CD4-positive, alpha-beta T cell (primary cell): ENCODE measurements at regions of chr3 and their contacts with region 1.

Region 1: DNA sequence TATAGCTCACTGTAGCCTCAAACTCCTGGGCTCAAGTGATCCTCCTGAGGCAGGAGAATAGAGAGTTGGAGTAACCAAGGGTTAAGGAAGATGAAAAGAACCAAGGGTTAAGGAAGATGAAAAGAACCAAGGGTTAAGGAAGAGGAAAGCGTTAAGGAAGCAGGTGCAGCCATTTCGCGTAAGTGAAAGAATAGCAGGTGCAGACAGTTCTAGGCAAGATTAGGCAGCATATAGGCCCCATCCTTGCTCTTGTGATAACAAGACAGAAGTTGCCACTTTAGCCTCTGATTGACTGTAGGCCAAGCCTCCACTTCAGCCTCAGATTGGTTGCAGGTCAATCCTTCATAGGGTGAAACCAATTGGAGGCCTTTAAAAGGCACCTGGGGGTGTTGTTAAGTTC is 677.4 kb downstream of the PDCD6IP start:
- DNase-seq: no peak
- ATAC-seq: no peak
- H3K4me3 ChIP-seq: no peak overlapping the region
- H3K4me3 Mint-ChIP-seq: no peak overlapping the region
- H3K27ac ChIP-seq: no peak overlapping the region
- H3K27ac Mint-ChIP-seq: no peak overlapping the region
- H3K4me1 ChIP-seq: no peaks in the 10 kb centered on the region
- H3K4me1 Mint-ChIP-seq: no peaks in the 10 kb centered on the region
- H3K27me3 ChIP-seq: no peaks in the 10 kb centered on the region
- H3K27me3 Mint-ChIP-seq: no peaks in the 10 kb centered on the region
- CTCF ChIP-seq: no peak

Region 2: GRCh38 chr3:34486151-34486550 is 10.3 kb after region 1 on chr3:
- CTCF ChIA-PET with region 1: no interaction called
- POLR2A ChIA-PET with region 1: no interaction called
- intact Hi-C with region 1: loop called in 1 of 2 experiments (anchors 1 kb)
- DNase-seq: no peak
- ATAC-seq: no peak
- H3K4me3 ChIP-seq: no peak overlapping the region
- H3K4me3 Mint-ChIP-seq: no peak overlapping the region
- H3K27ac ChIP-seq: no peak overlapping the region
- H3K27ac Mint-ChIP-seq: no peak overlapping the region
- H3K4me1 ChIP-seq: no peaks in the 10 kb centered on the region
- H3K4me1 Mint-ChIP-seq: peaks cover 33% of the 10 kb centered on the region
- H3K27me3 ChIP-seq: no peaks in the 10 kb centered on the region
- H3K27me3 Mint-ChIP-seq: no peaks in the 10 kb centered on the region
- CTCF ChIP-seq: no peak